Ovary (tissue), 10 donors: ENCODE measurements at regions of chr12 and their contacts with region 1.

Region 1: DNA sequence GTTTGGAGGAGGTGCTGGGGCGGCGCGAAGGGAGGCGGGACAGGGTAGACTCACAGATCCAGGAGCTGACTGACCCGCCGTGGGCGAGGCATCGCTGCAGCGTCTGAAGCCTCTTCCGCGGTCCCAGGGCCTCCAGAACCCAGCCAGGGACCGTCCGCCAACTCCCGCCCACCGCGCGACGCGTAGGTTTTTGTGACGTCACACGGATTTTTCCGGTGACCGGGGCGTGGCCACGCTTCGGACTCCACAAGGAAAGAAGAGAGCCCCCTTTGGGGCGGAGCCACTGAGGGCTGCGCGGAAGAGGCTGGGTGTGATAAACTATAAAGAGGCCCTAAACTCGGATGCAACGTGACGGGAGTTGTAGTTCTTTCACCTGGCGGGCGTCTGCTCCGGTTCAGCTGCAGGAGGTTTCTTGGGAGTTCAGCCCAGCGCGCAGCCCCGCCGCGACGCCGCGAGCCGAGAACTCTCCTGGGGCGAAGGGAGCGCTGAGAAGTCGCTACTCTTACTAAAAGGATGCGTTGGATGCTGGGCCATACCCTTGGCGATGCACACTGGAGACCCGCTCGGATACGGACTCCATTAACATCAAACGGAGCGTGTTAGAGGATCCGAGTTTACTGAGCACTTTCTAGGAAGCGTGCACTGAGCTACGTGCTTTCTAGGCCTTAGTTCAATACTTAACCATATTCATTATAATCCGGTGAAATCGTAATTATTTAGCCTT is at the start of gene AMN1:
- DNase-seq: peak; percentile 99 to 100 (median 99)
- H3K4me3 ChIP-seq: peak within 1 kb of the TSS; percentile 80
- H3K27ac ChIP-seq: peak within 1 kb of the TSS; percentile 77 to 85
- H3K4me1 ChIP-seq: peaks cover 8% of the 10 kb centered on the region
- H3K27me3 ChIP-seq: no peaks in the 10 kb centered on the region
- CTCF ChIP-seq: peak; percentile 13 to 29 (median 24)
- EP300 ChIP-seq: peak; percentile 69
- POLR2A ChIP-seq: peak; percentile 58
- total RNA-seq, gene AMN1: 17.4 to 30.3 (median 20.7) TPM

Region 2: DNA sequence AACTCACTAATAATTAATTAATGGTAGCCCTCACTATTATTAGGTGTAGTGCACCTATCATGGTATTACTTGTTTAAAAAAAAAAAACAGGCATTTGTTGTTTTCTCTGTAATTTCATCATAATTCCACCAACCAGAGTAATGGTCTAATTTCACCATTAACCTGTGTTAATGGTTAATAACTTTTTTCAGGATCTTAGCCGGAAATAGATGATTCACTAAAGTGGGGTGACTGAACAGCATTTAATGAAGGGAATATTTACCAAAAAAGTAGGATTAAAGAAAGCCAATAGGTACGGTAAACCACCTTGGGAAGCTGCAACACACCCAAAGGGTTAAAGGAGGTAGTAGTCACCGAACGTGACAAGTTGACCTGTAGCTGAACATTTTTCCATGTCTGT is 56.6 kb before region 1 on chr12:
- intact Hi-C with region 1: loop called in 1 of 4 experiments (anchors 5 kb)
- DNase-seq: no peak
- H3K4me3 ChIP-seq: no peak overlapping the region
- H3K27ac ChIP-seq: no peak overlapping the region
- H3K4me1 ChIP-seq: no peaks in the 10 kb centered on the region
- H3K27me3 ChIP-seq: no peaks in the 10 kb centered on the region
- CTCF ChIP-seq: no peak
- EP300 ChIP-seq: no peak
- POLR2A ChIP-seq: no peak

Region 3: GRCh38 chr12:32399337-32400113 is 670.4 kb after region 1 on chr12 and contains the start of gene FGD4:
- intact Hi-C with region 1: no loop called
- DNase-seq: peak; percentile 77 to 93 (median 88)
- H3K4me3 ChIP-seq: peak within 1 kb of the TSS; percentile 55
- H3K27ac ChIP-seq: peak within 1 kb of the TSS; percentile 73 to 75
- H3K4me1 ChIP-seq: peaks cover 9% of the 10 kb centered on the region
- H3K27me3 ChIP-seq: no peaks in the 10 kb centered on the region
- CTCF ChIP-seq: peak; percentile 56 to 63 (median 61)
- EP300 ChIP-seq: no peak
- POLR2A ChIP-seq: peak; percentile 48
- total RNA-seq, gene FGD4: 28.6 to 85.0 (median 52.9) TPM